ENCODE measurements at regions of chr11 and their contacts with region 1.

Region 1: DNA sequence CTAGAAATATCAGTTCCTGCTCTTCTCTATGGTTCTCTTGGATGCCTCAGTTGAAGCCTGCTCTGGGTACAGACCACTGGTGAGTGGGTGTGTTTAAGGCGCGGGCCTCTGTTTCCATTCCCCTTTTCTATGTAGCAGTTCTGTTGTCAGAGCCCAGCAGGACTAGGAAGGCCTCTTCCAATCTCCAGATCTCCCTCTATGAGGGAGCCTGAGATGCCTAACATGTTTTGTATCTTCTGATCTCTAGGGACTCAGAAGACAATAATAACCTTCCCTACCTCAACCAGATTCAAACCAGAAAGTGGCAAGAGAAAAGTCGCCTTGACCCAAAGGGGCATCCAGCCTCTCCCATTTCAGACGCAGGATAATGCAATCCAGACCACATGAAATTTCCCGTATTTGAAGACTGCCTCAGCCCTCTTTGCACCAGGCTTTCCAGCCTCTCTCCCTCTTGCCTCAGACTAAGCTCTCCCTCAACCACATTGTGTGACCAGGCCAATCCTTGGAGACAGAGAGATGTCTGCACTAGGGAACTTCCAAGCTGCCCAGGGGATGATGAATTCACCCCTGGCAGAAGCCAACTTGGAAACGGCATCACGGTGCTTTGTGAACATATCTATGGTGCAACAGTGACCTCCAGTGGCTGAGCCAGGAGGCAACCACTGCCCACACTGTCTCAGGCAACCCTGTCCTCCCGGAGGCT is 150.1 kb upstream of the UBASH3B start:
- DNase-seq: peak; percentile 98
- H3K4me3 ChIP-seq: no peak overlapping the region
- H3K27ac ChIP-seq: peak overlapping the region; percentile 83
- H3K4me1 ChIP-seq: peaks cover 12% of the 10 kb centered on the region
- H3K27me3 ChIP-seq: no peaks in the 10 kb centered on the region

Region 2: DNA sequence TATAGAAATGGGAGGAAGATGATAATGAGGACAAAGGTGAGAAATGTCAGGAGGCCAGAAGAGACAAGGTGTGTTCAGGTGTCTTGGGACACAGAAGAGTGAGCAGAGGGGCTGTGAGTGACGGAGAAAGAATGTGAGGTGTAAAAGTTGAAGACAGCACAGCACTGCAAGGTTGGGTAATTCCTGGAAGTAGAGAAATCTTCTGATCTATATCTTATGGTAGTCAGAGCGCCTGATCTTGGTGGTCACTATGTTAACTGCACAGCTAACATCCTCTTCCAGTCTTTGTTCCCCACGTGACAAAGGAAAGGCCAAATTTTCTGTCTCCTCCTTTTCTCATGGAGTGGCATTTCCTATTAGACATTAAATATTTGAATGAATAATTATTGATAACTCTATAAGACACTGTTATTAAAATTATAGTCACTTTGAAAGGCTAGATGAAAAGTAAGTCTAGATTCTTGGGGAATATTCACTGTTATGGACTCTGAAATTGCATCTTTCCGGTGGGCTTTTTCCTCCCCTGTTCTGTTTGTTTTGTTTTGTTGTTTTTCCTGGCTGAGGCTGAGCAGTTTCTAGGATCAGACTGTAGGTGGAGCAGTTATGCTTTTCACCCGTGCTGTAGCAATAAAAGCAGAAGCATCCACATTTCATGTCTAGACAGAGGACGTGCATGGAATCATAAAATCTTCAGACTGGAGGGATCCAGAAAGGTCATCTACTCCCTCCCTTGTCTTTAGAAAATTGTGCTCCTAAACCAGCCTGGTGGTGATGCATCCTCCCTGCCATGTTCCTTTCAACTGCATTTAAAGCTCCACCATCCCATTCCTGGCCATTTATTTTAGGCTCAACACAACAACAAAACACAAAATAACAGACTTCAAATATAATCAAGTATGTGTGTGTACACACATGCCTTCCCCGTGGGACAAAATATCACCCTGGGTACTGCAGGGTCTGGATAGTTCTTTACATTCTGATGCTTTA is 1186.3 kb before region 1 on chr11:
- in situ Hi-C with region 1: loop called (anchors 25 kb)
- DNase-seq: peak; percentile 74
- H3K4me3 ChIP-seq: no peak overlapping the region
- H3K27ac ChIP-seq: no peak overlapping the region
- H3K4me1 ChIP-seq: no peaks in the 10 kb centered on the region; the same call in 1 of the 2 replicates
- H3K27me3 ChIP-seq: peaks cover 16% of the 10 kb centered on the region; the same call in 1 of the 2 replicates

Region 3: GRCh38 chr11:121655537-121656327 is 849.7 kb before region 1 on chr11:
- in situ Hi-C with region 1: loop called (anchors 10 kb)
- DNase-seq: peak; percentile 99
- H3K4me3 ChIP-seq: peak overlapping the region; percentile 68
- H3K27ac ChIP-seq: peak overlapping the region; percentile 97
- H3K4me1 ChIP-seq: peaks cover 38% of the 10 kb centered on the region
- H3K27me3 ChIP-seq: no peaks in the 10 kb centered on the region

Region 4: DNA sequence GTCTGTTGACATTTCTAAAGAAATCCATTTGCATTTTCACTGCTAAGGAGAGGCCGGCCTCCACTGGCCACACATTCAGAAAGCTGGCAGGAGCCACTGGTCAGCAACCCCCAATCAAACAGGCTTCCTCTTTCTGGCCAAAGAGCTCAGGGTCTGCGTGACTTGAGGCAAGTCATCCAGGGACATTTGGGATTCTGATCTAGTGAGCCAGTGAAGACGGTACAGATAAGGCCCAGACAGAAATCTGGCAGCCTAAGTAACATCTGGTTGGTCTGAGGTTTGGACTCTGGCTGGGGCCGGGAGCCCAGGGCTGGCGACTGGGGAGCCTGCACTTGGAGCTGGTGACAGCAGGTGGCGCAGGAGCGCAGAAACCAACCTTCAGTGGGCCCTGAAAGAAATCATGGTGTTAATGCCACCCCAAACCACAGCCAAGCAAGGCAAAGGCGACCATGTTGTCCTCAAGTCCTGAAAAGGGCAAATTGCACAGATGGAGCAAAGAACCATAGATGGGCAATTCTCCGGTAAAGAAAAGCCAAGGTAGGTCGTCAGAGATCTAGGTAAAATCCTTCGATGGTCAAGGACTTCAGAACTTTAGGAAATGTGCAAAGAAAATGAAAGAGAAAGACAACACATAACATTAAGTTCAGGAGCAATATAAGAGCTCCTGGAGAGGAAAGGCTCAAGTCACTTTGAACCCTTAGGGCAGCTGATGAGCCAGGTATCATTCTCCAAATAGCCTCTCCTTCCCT is 290.0 kb before region 1 on chr11:
- in situ Hi-C with region 1: loop called (anchors 10 kb)
- DNase-seq: peak; percentile 95
- H3K4me3 ChIP-seq: no peak overlapping the region
- H3K27ac ChIP-seq: peak overlapping the region; percentile 88
- H3K4me1 ChIP-seq: peaks cover 43% of the 10 kb centered on the region
- H3K27me3 ChIP-seq: no peaks in the 10 kb centered on the region

Region 5: GRCh38 chr11:122572592-122572991 is 67.1 kb after region 1 on chr11:
- in situ Hi-C with region 1: no loop called
- DNase-seq: peak; percentile 14
- H3K4me3 ChIP-seq: no peak overlapping the region
- H3K27ac ChIP-seq: no peak overlapping the region
- H3K4me1 ChIP-seq: no peaks in the 10 kb centered on the region
- H3K27me3 ChIP-seq: peaks cover 13% of the 10 kb centered on the region; the same call in 1 of the 2 replicates

Measured in GM23248 (cell line).